Left colon (tissue), 2 donors: ENCODE measurements at regions of chr1 and their contacts with region 1.

Region 1: DNA sequence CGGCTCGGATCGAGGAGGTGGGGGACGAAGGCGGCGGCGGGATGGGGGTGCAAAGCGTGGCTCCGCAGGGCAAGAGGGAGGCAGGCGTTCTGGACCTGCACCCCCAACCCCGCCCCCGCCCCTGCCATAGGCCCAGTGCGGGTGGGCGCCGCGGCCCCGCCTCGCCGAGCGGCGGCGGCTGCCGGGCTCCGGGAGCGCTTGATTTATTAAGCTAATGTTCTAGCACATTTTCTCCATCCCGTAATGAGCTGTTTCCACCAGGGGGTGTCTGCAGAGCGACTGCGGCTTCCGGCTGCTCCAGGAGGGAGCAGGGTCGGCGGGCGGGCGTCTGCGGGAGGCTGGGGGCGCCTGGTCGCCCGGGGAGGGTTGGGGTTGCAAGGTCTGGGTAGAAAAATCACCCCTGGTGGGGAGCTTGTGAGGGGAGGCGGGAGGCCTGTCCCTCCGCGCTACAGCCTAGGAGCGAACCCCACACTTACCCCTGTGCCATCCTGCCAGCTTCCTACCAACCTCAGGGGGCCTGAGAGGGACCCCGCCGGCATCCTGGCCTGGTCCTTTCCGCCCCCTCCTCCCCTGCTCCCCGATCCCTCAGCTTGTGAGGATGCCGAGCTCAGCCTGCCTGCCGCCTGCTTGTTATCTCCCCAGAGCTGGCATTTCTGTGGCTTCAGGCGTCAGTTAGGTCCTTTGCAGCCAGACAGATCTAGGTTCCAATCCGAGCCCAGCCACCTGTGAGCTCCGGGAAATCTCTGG is 48.5 kb upstream of the ACOT11 start:
- DNase-seq: peak; percentile 51 to 53
- ATAC-seq: peak; percentile 82

Region 2: DNA sequence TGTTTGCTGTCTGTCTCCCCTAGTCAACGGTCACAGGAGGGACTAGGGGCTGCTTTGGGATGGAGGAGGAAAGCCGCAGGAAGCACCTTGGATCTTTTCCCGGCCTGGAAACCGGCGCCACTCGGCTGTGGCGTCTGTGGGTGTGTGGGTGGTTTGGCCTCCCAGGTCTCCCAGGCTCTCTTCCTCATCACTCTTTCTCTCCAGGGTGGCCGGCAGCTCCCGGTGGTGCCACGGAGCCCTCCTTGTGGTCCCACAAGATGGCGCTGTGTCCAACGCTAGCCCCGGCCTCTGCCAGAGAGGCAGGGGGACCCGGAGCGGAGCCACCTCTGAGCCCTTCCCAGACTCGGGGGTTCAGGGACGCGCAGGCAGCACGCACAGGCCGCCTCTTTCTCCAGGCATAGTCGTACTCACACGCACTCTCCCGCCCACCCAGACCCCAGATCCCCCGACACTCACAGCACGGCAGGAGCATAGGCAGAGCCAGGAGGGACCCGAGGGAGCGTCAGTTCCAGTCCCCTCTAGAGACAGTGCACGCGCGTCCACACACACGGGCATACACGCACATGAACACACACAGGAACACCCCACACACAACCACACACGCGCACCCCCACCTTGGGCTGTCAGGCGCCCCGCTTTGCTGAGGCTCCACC is 377.9 kb before region 1 on chr1:
- intact Hi-C with region 1: loop called (anchors 10 kb)
- DNase-seq: peak; percentile 76 to 86
- ATAC-seq: peak; percentile 82

Region 3: GRCh38 chr1:54347955-54348699 is 151.4 kb before region 1 on chr1:
- intact Hi-C with region 1: no loop called
- DNase-seq: peak; percentile 77 to 89
- ATAC-seq: peak; percentile 87

Region 4: DNA sequence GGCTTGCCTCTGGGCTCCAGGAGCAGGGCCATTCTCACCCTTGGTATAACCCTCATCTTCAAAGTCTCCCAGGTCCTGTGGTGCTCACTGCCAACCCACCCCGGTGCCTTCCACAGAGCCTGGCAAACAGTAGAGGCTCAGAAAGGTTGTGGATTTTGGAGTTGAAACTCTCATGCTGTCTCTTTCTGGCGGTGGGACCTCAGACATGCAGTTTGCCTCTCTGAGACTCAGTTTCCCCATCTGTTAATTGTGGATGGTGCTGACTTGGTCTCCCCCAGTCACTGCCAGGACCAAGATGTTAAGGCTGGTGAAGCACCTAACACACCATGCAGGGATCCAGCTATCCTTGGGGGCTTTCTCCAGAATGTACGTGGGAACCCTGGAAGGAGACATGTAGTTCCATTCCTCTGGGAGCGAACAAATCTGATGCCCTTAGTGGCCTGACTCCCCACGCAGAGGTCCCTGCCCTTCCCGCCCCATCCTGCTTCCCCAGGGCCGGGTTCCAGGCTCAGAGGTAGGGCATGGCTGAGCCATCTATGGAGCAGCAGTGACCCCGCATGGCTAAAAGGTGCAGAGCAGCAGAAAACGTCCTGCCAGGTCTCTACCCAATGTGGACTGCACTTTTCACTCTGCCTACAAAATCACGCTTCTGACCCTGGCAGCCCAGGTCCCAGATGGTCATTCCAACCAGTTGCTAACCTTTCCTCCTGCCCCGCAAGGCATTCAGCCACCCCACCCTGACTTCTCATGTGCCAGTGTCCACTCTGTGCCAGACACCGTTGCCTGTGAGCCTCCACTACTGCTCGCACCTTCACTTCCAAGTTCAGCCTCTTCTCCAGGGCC is 310.8 kb after region 1 on chr1:
- intact Hi-C with region 1: loop called in 1 of 2 experiments (anchors 10 kb)
- DNase-seq: peak in 1 of 2 donors; percentile 83
- ATAC-seq: peak; percentile 73